ENCODE measurements at regions of chr2 and their contacts with region 1.

Region 1: GRCh38 chr2:231463698-231464575 is at the start of gene NCL:
- DNase-seq: no peak
- H3K4me3 ChIP-seq: peak within 1 kb of the TSS; percentile 85 to 97 (median 94)
- H3K27ac ChIP-seq: peak within 1 kb of the TSS; percentile 99
- H3K4me1 ChIP-seq: peaks cover 0 to 20% (median 6%) of the 10 kb centered on the region in 4 experiments; a peak in 6 of 7 replicates
- H3K27me3 ChIP-seq: no peaks in the 10 kb centered on the region
- CTCF ChIP-seq: no peak
- EP300 ChIP-seq: no peak
- POLR2A ChIP-seq: peak; percentile 98 to 99
- RAD21 ChIP-seq: no peak
- total RNA-seq, gene NCL: 1,442 and 1,478 TPM in 2 replicates

Region 2: GRCh38 chr2:231227309-231228162 is 236.4 kb before region 1 on chr2:
- CTCF ChIA-PET with region 1: interaction called, 4 read pairs
- POLR2A ChIA-PET with region 1: interaction called, 11 read pairs
- DNase-seq: peak in 1 of 2 experiments; percentile 29
- H3K4me3 ChIP-seq: no peak overlapping the region
- H3K27ac ChIP-seq: no peak overlapping the region
- H3K4me1 ChIP-seq: peaks cover 0 to 7% (median 4%) of the 10 kb centered on the region in 4 experiments
- H3K27me3 ChIP-seq: no peaks in the 10 kb centered on the region
- CTCF ChIP-seq: peak; percentile 65 to 91 (median 89)
- EP300 ChIP-seq: no peak
- POLR2A ChIP-seq: no peak
- RAD21 ChIP-seq: peak; percentile 95 to 96

Region 3: DNA sequence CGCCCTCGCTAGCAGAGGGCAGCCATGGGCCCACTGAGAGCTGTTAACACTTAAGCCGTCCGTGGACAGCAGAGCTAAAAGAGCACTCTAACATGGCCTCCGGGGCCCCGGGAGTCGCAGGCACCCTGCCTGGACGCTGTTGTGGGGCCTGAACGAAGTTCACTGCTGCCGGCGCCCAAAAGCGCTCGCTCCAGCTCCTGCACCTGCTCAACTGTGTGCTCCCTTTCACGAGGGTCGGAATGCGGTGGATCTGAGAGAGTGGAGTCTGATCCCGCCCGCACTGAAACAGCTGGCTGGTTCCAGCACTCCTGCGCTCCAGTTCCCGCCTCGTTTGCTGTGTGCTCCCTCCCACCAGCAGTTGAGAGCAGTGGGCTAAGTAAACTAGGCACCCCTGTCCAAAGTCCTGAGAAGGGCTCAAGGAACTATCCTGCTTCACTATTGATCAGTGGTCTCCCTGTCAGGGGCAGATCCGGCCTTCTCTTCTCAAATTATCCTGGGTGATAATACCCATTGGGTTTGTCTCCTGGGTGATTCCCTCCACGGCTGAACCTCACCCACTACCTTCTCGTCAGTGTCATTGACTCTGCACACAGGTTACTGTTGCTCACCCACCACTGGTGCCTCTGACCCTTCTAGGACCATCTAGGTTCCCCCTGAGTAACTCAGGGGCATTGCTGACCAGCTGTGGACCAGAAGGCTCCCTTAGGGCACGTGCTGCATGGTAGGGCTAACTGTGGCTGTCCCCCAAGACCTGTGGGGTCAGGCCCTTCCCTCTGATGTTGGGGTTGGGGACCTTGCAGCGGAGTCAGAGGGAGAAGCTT is 44.9 kb before region 1 on chr2:
- CTCF ChIA-PET with region 1: no interaction called
- POLR2A ChIA-PET with region 1: interaction called, 235 read pairs
- DNase-seq: no peak
- H3K4me3 ChIP-seq: no peak overlapping the region
- H3K27ac ChIP-seq: no peak overlapping the region
- H3K4me1 ChIP-seq: peaks cover 1 to 6% (median 4%) of the 10 kb centered on the region in 4 experiments; a peak in 6 of 7 replicates
- H3K27me3 ChIP-seq: no peaks in the 10 kb centered on the region
- CTCF ChIP-seq: no peak
- EP300 ChIP-seq: no peak
- POLR2A ChIP-seq: no peak
- RAD21 ChIP-seq: no peak

Region 4: GRCh38 chr2:231482806-231483391 is 19.0 kb after region 1 on chr2:
- CTCF ChIA-PET with region 1: interaction called, 94 read pairs
- POLR2A ChIA-PET with region 1: interaction called, 364 read pairs
- DNase-seq: peak in 1 of 2 experiments; percentile 89
- H3K4me3 ChIP-seq: no peak overlapping the region
- H3K27ac ChIP-seq: no peak overlapping the region
- H3K4me1 ChIP-seq: peaks cover 0 to 2% (median 0%) of the 10 kb centered on the region in 4 experiments; a peak in 1 of 7 replicates
- H3K27me3 ChIP-seq: no peaks in the 10 kb centered on the region
- CTCF ChIP-seq: peak; percentile 75 to 85 (median 79)
- EP300 ChIP-seq: no peak
- POLR2A ChIP-seq: no peak
- RAD21 ChIP-seq: peak; percentile 37 to 67; a peak in 3 of 4 replicates

Region 5: DNA sequence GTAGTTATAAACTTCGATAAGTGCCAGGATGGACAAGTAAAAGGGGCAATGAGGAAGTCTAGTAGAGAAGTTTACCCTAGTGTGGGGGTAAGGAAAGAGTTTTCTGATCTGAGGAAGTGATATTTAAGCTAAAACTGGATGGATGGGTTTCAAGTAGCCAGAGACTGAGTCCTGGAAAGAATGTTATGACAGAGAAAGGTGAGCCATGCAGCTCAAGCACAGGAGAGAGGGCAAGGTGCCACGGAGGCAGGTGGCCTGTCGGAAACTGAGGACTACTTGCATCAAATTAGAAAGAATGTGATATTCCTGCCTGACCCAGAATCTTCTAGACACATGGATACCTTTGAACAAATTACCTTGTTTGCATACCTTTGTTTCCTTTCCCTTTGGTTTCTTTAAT is 39.8 kb after region 1 on chr2:
- CTCF ChIA-PET with region 1: no interaction called
- POLR2A ChIA-PET with region 1: interaction called, 12 read pairs
- DNase-seq: no peak
- H3K4me3 ChIP-seq: no peak overlapping the region
- H3K27ac ChIP-seq: no peak overlapping the region
- H3K4me1 ChIP-seq: no peaks in the 10 kb centered on the region
- H3K27me3 ChIP-seq: no peaks in the 10 kb centered on the region
- CTCF ChIP-seq: no peak
- EP300 ChIP-seq: no peak
- POLR2A ChIP-seq: no peak
- RAD21 ChIP-seq: no peak

Region 6: GRCh38 chr2:231535961-231536360 is 72.0 kb after region 1 on chr2:
- CTCF ChIA-PET with region 1: interaction called, 3 read pairs
- POLR2A ChIA-PET with region 1: interaction called, 12 read pairs
- DNase-seq: no peak
- H3K4me3 ChIP-seq: no peak overlapping the region
- H3K27ac ChIP-seq: no peak overlapping the region
- H3K4me1 ChIP-seq: peaks cover 0 to 7% (median 3%) of the 10 kb centered on the region in 4 experiments; a peak in 2 of 7 replicates
- H3K27me3 ChIP-seq: peaks cover 0 to 2% (median 0%) of the 10 kb centered on the region in 4 experiments; a peak in 3 of 7 replicates
- CTCF ChIP-seq: no peak
- EP300 ChIP-seq: no peak
- POLR2A ChIP-seq: no peak
- RAD21 ChIP-seq: no peak

Region 7: DNA sequence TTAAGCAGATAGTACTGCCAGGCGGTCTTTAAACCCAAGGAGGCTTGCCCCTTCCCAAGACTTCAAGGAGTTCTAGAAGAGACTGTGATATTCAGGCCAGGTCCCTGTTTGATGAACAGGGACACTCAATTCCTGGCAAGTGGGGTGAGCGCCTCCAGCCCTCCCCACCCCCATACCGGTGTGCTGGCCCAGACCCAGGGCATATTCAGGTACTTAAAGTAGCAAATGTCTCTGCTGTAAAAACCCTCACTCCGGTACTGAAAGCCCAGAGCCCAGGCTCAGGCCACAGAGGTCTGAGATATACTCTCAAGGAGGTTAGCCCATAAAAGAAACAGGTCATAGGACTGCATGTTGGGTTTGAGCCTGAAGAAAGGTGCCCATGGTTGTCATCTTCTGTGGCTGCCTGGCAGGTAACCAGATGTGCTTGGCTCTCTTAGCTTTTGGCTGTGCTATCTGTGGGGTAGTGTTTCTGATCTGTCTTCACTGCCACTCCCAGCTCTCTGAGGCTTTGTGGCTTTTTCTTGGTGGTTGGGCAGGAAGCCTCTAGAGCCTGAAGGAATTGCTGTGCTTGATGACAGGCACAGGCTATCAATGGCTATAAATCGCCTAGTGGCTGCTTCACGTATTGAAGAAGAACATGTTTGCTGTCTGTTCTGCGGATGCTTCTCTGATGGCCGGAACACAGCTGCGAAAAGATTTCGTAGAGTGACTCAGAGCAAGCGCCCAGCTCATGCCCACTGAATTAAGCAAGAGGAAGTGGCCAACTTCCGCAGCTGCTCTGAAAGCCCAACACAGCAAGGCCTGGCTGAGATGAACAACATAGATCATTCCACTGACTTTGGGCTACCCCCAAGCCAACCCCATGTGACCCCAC is 851.3 kb after region 1 on chr2:
- CTCF ChIA-PET with region 1: no interaction called
- POLR2A ChIA-PET with region 1: no interaction called
- DNase-seq: no peak
- H3K4me3 ChIP-seq: no peak overlapping the region
- H3K27ac ChIP-seq: no peak overlapping the region; the same call in 1 of the 2 replicates
- H3K4me1 ChIP-seq: no peaks in the 10 kb centered on the region
- H3K27me3 ChIP-seq: no peaks in the 10 kb centered on the region
- CTCF ChIP-seq: peak in 1 of 3 experiments; percentile 32; a peak in 1 of 4 replicates
- EP300 ChIP-seq: no peak
- POLR2A ChIP-seq: no peak
- RAD21 ChIP-seq: no peak; a peak in 1 of 4 replicates